GM12878 (cell line): ENCODE measurements at regions of chr22 and their contacts with region 1.

Region 1: DNA sequence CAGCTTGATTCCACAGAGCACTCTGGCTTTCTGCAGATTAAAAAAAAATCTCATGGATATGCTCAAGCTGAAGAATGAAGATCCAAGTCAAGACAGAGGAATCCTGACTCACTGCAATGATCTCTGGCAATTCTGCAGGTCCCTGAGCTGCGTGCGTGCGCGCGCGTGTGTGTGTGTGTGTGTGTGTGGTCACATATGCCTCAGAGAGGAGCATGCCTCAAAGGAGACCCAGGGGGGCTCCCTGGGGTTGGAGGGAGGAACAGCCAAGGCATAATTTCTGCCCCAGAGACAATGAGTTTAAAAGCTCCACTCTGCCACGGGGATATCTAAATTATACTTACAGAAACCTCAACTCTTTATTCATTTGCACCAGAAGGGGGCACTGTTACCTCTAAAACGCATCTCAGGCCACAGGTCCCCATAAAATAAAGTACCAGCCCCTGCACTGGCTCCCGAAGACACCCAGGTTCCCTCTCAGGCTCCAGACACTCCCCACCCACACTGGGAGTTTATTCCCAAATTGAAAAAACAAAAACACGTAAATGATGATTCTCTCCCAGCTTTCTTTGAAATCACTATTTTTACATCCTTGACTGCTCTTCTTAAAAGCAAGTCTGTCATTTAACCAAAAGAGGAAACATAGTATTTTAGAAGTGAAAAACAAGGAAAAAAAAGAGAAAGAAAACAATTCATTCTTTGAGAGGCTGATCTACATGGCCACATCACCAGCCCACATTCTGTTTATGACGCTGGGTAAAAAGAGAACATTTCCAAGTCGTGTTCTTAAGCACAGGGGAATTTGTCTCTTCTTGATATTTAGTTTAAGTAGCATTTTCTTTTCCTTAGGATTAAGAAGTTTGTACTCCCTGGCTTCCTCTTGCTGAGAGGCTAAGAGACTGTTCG is 401.0 kb downstream of the LARGE1 start:
- DNase-seq: peak; percentile 37
- ATAC-seq: peak; percentile 78
- H3K4me3 ChIP-seq: no peak overlapping the region
- H3K27ac ChIP-seq: peak overlapping the region; percentile 45; the same call in 1 of the 2 replicates
- H3K4me1 ChIP-seq: peaks cover 27% of the 10 kb centered on the region
- H3K27me3 ChIP-seq: no peaks in the 10 kb centered on the region
- CTCF ChIP-seq: peak; percentile 50 to 61 (median 50)
- EP300 ChIP-seq: no peak
- POLR2A ChIP-seq: no peak
- RAD21 ChIP-seq: peak; percentile 86

Region 2: DNA sequence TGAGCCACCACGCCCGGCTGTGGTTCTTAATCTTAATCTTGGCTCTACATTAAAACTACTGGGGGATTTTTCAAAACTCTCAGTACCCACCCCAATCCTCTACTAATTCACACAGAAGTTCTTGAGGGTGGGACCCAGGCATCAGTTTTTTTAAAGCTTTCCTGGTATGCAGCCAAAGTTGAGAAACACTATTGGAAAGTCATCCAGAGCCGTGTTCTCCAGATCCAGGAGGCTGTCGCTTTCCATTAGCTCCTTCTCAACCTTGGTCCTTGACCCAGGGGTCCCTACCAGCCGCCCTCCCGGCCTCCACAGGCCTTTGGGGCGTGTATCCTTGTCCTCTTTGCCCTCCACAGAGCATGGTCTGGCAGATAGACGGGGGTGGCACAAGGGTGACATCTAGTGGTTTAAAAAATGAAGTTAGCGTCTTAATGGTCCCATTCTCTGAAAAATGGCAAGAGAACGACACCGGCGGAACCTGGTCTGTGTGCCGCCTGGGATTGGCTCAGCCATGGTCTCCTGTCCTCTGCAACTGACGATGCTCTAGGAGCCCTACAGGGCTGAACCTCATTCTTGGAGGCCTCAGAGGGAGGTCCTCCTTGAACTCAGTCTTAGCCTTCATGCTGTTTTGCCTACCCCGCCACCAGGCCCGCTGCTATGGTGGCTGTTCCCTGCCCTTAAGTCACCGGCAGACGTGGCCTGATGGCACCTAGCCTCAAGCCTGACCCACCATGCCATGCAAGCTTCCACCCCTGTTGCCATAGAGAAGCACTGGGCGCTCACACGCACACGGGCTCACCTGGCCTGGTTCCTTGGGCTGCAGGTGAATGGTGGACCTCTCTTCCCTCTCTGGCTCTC is 309.2 kb before region 1 on chr22:
- CTCF ChIA-PET with region 1: no interaction called
- POLR2A ChIA-PET with region 1: no interaction called
- RAD21 ChIA-PET with region 1: no interaction called
- SMC1A ChIA-PET with region 1: no interaction called
- in situ Hi-C with region 1: no loop called
- intact Hi-C with region 1: no loop called
- DNase-seq: no peak
- ATAC-seq: peak; percentile 98
- H3K4me3 ChIP-seq: no peak overlapping the region
- H3K27ac ChIP-seq: no peak overlapping the region
- H3K4me1 ChIP-seq: no peaks in the 10 kb centered on the region
- H3K27me3 ChIP-seq: no peaks in the 10 kb centered on the region
- CTCF ChIP-seq: peak; percentile 69 to 72 (median 70)
- EP300 ChIP-seq: no peak
- POLR2A ChIP-seq: no peak
- RAD21 ChIP-seq: peak; percentile 77

Region 3: GRCh38 chr22:33467620-33468095 is 51.7 kb before region 1 on chr22:
- CTCF ChIA-PET with region 1: interaction called, 12 read pairs
- POLR2A ChIA-PET with region 1: interaction called, 3 read pairs
- RAD21 ChIA-PET with region 1: interaction called, 6 read pairs
- SMC1A ChIA-PET with region 1: interaction called, 6 read pairs
- in situ Hi-C with region 1: no loop called
- intact Hi-C with region 1: no loop called
- DNase-seq: no peak
- ATAC-seq: no peak
- H3K4me3 ChIP-seq: no peak overlapping the region
- H3K27ac ChIP-seq: no peak overlapping the region
- H3K4me1 ChIP-seq: peaks cover 24% of the 10 kb centered on the region
- H3K27me3 ChIP-seq: no peaks in the 10 kb centered on the region
- CTCF ChIP-seq: peak in 1 of 3 experiments; percentile 15; a peak in 1 of 6 replicates
- EP300 ChIP-seq: no peak
- POLR2A ChIP-seq: no peak
- RAD21 ChIP-seq: no peak

Region 4: DNA sequence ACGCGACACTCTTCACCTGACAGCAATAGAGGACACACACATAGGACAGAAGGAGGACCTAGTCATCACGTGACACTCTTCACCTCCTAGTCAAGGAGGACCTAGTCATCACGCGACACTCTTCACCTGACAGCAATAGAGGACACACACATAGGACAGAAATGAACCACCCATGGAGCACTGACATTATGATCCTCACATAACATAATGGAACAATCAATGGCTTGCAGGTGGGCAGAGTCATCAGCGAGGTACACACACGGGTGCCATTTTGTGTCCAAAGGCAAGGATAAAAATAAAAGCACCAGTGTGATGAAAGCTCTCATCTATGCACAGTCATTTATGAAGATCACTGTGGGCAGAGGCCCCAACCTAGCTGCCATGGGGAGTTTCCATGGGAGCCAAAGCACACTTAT is 46.3 kb after region 1 on chr22:
- CTCF ChIA-PET with region 1: interaction called, 68 read pairs
- POLR2A ChIA-PET with region 1: no interaction called
- RAD21 ChIA-PET with region 1: interaction called, 15 read pairs
- SMC1A ChIA-PET with region 1: interaction called, 48 read pairs
- in situ Hi-C with region 1: no loop called
- intact Hi-C with region 1: no loop called
- DNase-seq: no peak
- ATAC-seq: peak; percentile 30
- H3K4me3 ChIP-seq: no peak overlapping the region
- H3K27ac ChIP-seq: peak overlapping the region; percentile 64
- H3K4me1 ChIP-seq: peaks cover 46% of the 10 kb centered on the region
- H3K27me3 ChIP-seq: no peaks in the 10 kb centered on the region
- CTCF ChIP-seq: no peak
- EP300 ChIP-seq: no peak
- POLR2A ChIP-seq: no peak
- RAD21 ChIP-seq: no peak

Region 5: GRCh38 chr22:33579448-33580093 is 60.2 kb after region 1 on chr22:
- CTCF ChIA-PET with region 1: interaction called, 138 read pairs
- POLR2A ChIA-PET with region 1: no interaction called
- RAD21 ChIA-PET with region 1: interaction called, 31 read pairs
- SMC1A ChIA-PET with region 1: interaction called, 125 read pairs
- in situ Hi-C with region 1: loop called (anchors 5 kb)
- intact Hi-C with region 1: loop called (anchors 1 kb)
- DNase-seq: no peak
- ATAC-seq: peak; percentile 97
- H3K4me3 ChIP-seq: no peak overlapping the region
- H3K27ac ChIP-seq: no peak overlapping the region
- H3K4me1 ChIP-seq: peaks cover 3% of the 10 kb centered on the region; the same call in 1 of the 2 replicates
- H3K27me3 ChIP-seq: no peaks in the 10 kb centered on the region
- CTCF ChIP-seq: peak; percentile 86 to 98 (median 95)
- EP300 ChIP-seq: no peak
- POLR2A ChIP-seq: no peak
- RAD21 ChIP-seq: peak; percentile 95

Region 6: GRCh38 chr22:33697640-33698039 is 178.3 kb after region 1 on chr22:
- CTCF ChIA-PET with region 1: no interaction called
- POLR2A ChIA-PET with region 1: no interaction called
- RAD21 ChIA-PET with region 1: no interaction called
- SMC1A ChIA-PET with region 1: no interaction called
- in situ Hi-C with region 1: no loop called
- intact Hi-C with region 1: no loop called
- DNase-seq: no peak
- ATAC-seq: no peak
- H3K4me3 ChIP-seq: no peak overlapping the region
- H3K27ac ChIP-seq: no peak overlapping the region
- H3K4me1 ChIP-seq: no peaks in the 10 kb centered on the region
- H3K27me3 ChIP-seq: no peaks in the 10 kb centered on the region
- CTCF ChIP-seq: no peak
- EP300 ChIP-seq: no peak
- POLR2A ChIP-seq: no peak
- RAD21 ChIP-seq: no peak

Region 7: GRCh38 chr22:35023692-35024363 is 1504.5 kb after region 1 on chr22:
- CTCF ChIA-PET with region 1: no interaction called
- POLR2A ChIA-PET with region 1: no interaction called
- RAD21 ChIA-PET with region 1: interaction called, 3 read pairs
- SMC1A ChIA-PET with region 1: interaction called, 3 read pairs
- in situ Hi-C with region 1: loop called (anchors 10 kb)
- intact Hi-C with region 1: no loop called
- DNase-seq: no peak
- ATAC-seq: peak; percentile 98
- H3K4me3 ChIP-seq: no peak overlapping the region
- H3K27ac ChIP-seq: no peak overlapping the region
- H3K4me1 ChIP-seq: no peaks in the 10 kb centered on the region
- H3K27me3 ChIP-seq: no peaks in the 10 kb centered on the region
- CTCF ChIP-seq: peak; percentile 88 to 94 (median 92)
- EP300 ChIP-seq: no peak
- POLR2A ChIP-seq: no peak
- RAD21 ChIP-seq: peak; percentile 90